ENCODE measurements at regions of chr19 and their contacts with region 1.

Region 1: GRCh38 chr19:56080669-56081401 is 40.3 kb downstream of the ZNF787 start:
- DNase-seq: peak; percentile 84
- H3K4me3 ChIP-seq: peak overlapping the region; percentile 35 to 54
- H3K27ac ChIP-seq: no peak overlapping the region
- H3K4me1 ChIP-seq: peaks cover 0 to 6% of the 10 kb centered on the region in 2 experiments; a peak in 1 of 4 replicates
- H3K27me3 ChIP-seq: no peaks in the 10 kb centered on the region
- CTCF ChIP-seq: peak; percentile 51
- EP300 ChIP-seq: no peak
- RAD21 ChIP-seq: peak; percentile 58

Region 2: DNA sequence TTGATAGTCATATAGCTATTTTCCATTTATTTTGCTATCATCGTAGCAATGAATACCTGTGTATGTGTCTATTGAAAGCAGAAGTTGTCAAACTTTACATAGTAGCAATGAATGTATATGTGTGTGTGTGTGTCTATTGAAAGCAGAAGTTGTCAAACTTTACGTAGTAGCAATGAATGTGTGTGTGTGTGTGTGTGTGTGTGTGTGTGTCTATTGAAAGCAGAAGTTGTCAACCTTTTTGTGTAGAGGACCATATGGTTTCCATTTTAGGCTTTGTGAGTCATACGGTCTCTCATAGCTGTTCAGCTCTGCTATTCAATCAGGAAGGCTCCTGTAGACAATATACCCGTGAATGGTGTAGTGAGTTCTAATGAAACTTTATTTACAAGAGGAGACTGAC is 223.7 kb before region 1 on chr19:
- CTCF ChIA-PET with region 1: no interaction called
- POLR2A ChIA-PET with region 1: no interaction called
- DNase-seq: no peak
- H3K4me3 ChIP-seq: no peak overlapping the region
- H3K27ac ChIP-seq: no peak overlapping the region
- H3K4me1 ChIP-seq: no peaks in the 10 kb centered on the region
- H3K27me3 ChIP-seq: peaks cover 29% of the 10 kb centered on the region; the same call in 1 of the 2 replicates
- CTCF ChIP-seq: no peak
- EP300 ChIP-seq: no peak
- RAD21 ChIP-seq: no peak

Region 3: DNA sequence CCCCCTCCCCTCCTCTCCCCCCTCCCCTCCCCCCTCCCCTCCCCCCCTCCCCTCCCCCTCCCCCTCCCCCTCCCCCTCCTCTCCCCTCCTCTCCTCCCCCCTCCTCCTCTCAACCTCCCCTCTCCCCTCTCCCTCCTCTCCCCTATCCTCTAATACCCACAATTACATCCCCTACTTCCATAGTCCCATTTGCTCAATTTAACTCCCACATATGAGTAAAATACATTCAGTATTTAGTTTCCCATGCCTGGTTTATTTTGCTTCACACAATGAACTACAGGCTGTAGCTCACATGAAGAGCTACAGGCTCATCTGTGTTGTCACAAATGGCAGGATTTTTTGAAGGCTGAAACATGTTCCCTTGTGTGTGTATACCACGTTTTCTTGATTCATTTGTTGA is 87.3 kb before region 1 on chr19:
- CTCF ChIA-PET with region 1: no interaction called
- POLR2A ChIA-PET with region 1: no interaction called
- DNase-seq: no peak
- H3K4me3 ChIP-seq: no peak overlapping the region
- H3K27ac ChIP-seq: no peak overlapping the region
- H3K4me1 ChIP-seq: no peaks in the 10 kb centered on the region
- H3K27me3 ChIP-seq: peaks cover 11% of the 10 kb centered on the region
- CTCF ChIP-seq: no peak
- EP300 ChIP-seq: no peak
- RAD21 ChIP-seq: no peak

Region 4: GRCh38 chr19:56090931-56091490 is 10.2 kb after region 1 on chr19:
- CTCF ChIA-PET with region 1: interaction called, 18 read pairs
- POLR2A ChIA-PET with region 1: no interaction called
- DNase-seq: no peak
- H3K4me3 ChIP-seq: no peak overlapping the region
- H3K27ac ChIP-seq: no peak overlapping the region
- H3K4me1 ChIP-seq: no peaks in the 10 kb centered on the region; a peak in 1 of 4 replicates
- H3K27me3 ChIP-seq: no peaks in the 10 kb centered on the region
- CTCF ChIP-seq: no peak
- EP300 ChIP-seq: no peak
- RAD21 ChIP-seq: no peak

Region 5: GRCh38 chr19:56133858-56134653 is 53.2 kb after region 1 on chr19:
- CTCF ChIA-PET with region 1: interaction called, 12 read pairs
- POLR2A ChIA-PET with region 1: no interaction called
- DNase-seq: no peak
- H3K4me3 ChIP-seq: no peak overlapping the region
- H3K27ac ChIP-seq: peak overlapping the region in 1 of 2 experiments; percentile 52; a peak in 1 of 4 replicates
- H3K4me1 ChIP-seq: peaks cover 0 to 9% of the 10 kb centered on the region in 2 experiments; a peak in 2 of 4 replicates
- H3K27me3 ChIP-seq: no peaks in the 10 kb centered on the region
- CTCF ChIP-seq: no peak
- EP300 ChIP-seq: no peak
- RAD21 ChIP-seq: no peak

Region 6: GRCh38 chr19:56170261-56170660 is 89.4 kb after region 1 on chr19:
- CTCF ChIA-PET with region 1: interaction called, 56 read pairs
- POLR2A ChIA-PET with region 1: no interaction called
- DNase-seq: no peak
- H3K4me3 ChIP-seq: no peak overlapping the region
- H3K27ac ChIP-seq: no peak overlapping the region
- H3K4me1 ChIP-seq: no peaks in the 10 kb centered on the region
- H3K27me3 ChIP-seq: peaks cover 37% of the 10 kb centered on the region; the same call in 1 of the 2 replicates
- CTCF ChIP-seq: no peak
- EP300 ChIP-seq: no peak
- RAD21 ChIP-seq: no peak

Region 7: DNA sequence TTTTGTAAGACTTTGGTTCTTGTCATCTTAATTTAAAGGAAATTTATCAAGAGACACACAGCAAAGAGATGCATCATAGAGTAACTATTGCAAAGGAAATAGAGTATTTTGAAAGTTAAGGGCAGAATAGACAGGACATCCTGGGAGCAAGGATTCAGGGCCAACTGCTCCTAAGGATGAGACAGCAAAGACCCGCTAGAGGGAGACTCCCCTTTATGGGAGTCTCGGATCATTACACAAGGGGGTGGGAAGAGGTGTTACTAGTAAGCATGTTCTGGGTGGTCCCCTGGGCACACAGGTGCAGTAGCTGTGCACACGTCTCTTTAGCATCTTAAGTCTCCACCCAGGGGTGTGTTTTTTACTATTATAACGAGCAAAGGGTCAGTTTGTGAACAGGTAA is 130.9 kb after region 1 on chr19:
- CTCF ChIA-PET with region 1: interaction called, 10 read pairs
- POLR2A ChIA-PET with region 1: no interaction called
- DNase-seq: no peak
- H3K4me3 ChIP-seq: no peak overlapping the region
- H3K27ac ChIP-seq: no peak overlapping the region
- H3K4me1 ChIP-seq: no peaks in the 10 kb centered on the region
- H3K27me3 ChIP-seq: peaks cover 25% of the 10 kb centered on the region; the same call in 1 of the 2 replicates
- CTCF ChIP-seq: no peak
- EP300 ChIP-seq: no peak
- RAD21 ChIP-seq: no peak

Region 8: GRCh38 chr19:56333505-56333904 is 252.7 kb after region 1 on chr19:
- CTCF ChIA-PET with region 1: interaction called, 51 read pairs
- POLR2A ChIA-PET with region 1: no interaction called
- DNase-seq: peak; percentile 64
- H3K4me3 ChIP-seq: no peak overlapping the region; a peak in 1 of 4 replicates
- H3K27ac ChIP-seq: no peak overlapping the region
- H3K4me1 ChIP-seq: no peaks in the 10 kb centered on the region
- H3K27me3 ChIP-seq: no peaks in the 10 kb centered on the region
- CTCF ChIP-seq: peak; percentile 82
- EP300 ChIP-seq: no peak
- RAD21 ChIP-seq: peak; percentile 89